Activated B cell treated with CpG ODN at 0.5 μM for 24 hours (primary cell): ENCODE measurements at regions of chr1 and their contacts with region 1.

Region 1: DNA sequence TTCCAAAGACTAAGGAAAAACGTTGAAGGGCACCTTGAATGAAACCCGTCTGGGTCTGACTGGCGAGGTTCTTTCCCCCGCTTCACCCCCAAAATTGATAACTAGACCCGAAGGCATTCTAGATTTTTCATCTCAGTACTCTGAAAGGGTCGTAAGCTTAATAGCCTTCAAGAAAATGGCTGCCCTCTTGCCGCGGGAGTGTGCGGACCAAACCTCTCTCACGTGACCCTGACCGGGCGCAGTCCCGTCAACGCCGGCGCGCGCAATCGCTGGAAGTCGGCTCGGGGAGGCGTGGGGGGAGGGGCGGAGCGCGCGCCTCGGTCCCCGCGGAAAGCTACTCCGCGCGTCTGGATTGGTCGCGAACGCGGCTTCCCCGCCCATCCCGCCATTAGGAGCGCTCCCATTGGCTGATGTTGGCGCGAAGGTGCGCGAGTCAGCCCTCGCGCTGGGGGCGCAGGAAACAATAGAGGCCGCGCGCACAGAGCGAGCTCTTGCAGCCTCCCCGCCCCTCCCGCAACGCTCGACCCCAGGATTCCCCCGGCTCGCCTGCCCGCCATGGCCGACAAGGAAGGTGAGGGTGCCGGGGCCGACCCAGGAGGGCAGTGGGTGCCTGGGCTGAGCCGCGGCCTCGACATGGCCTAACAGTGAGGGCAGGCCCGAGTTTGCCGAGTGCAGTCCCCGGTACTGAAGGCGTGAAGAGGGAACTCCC is at the start of gene RBBP4:
- DNase-seq: peak; percentile 99
- ATAC-seq: peak; percentile 82
- H3K4me3 Mint-ChIP-seq: peak within 1 kb of the TSS; percentile 97
- H3K27ac Mint-ChIP-seq: peak within 1 kb of the TSS; percentile 100
- H3K4me1 Mint-ChIP-seq: peaks cover 70% of the 10 kb centered on the region
- H3K27me3 Mint-ChIP-seq: no peaks in the 10 kb centered on the region
- CTCF ChIP-seq: no peak
- total RNA-seq, gene RBBP4: 228 and 241 TPM in 2 replicates

Region 2: DNA sequence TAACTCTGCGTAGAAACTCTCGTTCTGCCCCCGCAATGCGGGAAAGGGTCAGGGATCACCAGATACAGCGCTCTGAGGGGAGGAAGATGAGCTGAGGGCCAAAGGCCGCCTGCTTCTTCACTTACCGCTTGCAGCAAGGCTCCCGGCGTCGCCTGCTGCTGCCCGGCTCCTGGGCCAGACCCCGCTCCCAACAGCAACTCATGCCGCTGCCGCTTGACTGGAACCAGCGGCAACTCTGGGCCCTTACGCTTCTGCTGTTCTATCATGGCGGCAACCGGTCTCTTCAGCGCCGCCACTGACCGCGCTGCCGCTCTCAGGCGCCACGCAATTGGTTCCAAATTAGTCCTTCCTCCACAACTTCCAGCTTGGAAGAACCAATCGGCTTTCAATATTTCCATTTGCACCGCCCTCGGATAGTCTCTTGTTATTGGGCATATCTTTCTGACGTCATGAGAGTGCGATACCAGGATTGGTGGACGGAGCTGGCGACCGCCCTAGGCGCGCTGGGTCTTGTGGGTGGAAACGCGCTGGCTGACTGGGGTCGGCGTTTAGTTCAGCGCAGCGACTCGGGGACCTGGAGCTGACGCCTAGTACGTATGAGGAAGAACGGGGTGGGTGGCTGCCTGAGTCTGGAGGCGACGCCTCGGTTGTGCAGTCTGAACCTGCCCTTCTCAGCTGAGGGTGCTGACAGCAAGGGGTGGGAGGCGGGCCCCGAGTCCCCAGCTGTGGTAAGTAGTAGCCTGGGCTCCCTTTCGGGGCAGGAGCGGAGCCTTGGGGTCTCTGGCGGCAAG is 1354.2 kb before region 1 on chr1 and contains the starts of genes SNRNP40 and ZCCHC17:
- CTCF ChIA-PET with region 1: no interaction called
- POLR2A ChIA-PET with region 1: interaction called, 8 read pairs
- intact Hi-C with region 1: loop called (anchors 2 kb)
- DNase-seq: peak; percentile 79
- ATAC-seq: peak; percentile 96
- H3K4me3 Mint-ChIP-seq: no peak within 1 kb of the TSS
- H3K27ac Mint-ChIP-seq: no peak within 1 kb of the TSS
- H3K4me1 Mint-ChIP-seq: peaks cover 13% of the 10 kb centered on the region
- H3K27me3 Mint-ChIP-seq: no peaks in the 10 kb centered on the region
- CTCF ChIP-seq: no peak
- total RNA-seq, gene SNRNP40: 83.2 and 85.1 TPM in 2 replicates
- total RNA-seq, gene ZCCHC17: 19.5 and 19.9 TPM in 2 replicates

Region 3: GRCh38 chr1:32394141-32394889 is 256.6 kb before region 1 on chr1 and contains the start of gene BSDC1:
- CTCF ChIA-PET with region 1: no interaction called
- POLR2A ChIA-PET with region 1: interaction called, 5 read pairs
- intact Hi-C with region 1: loop called (anchors 1 kb)
- DNase-seq: peak; percentile 97
- ATAC-seq: peak; percentile 99
- H3K4me3 Mint-ChIP-seq: peak within 1 kb of the TSS; percentile 100
- H3K27ac Mint-ChIP-seq: peak within 1 kb of the TSS; percentile 98
- H3K4me1 Mint-ChIP-seq: peaks cover 27% of the 10 kb centered on the region
- H3K27me3 Mint-ChIP-seq: no peaks in the 10 kb centered on the region
- CTCF ChIP-seq: no peak
- total RNA-seq, gene BSDC1: 51.8 and 72.2 TPM in 2 replicates

Region 4: GRCh38 chr1:32521165-32521564 is 129.7 kb before region 1 on chr1:
- CTCF ChIA-PET with region 1: no interaction called
- POLR2A ChIA-PET with region 1: interaction called, 6 read pairs
- intact Hi-C with region 1: loop called (anchors 2 kb)
- DNase-seq: no peak
- ATAC-seq: no peak
- H3K4me3 Mint-ChIP-seq: peak overlapping the region; percentile 82
- H3K27ac Mint-ChIP-seq: no peak overlapping the region
- H3K4me1 Mint-ChIP-seq: peaks cover 5% of the 10 kb centered on the region
- H3K27me3 Mint-ChIP-seq: no peaks in the 10 kb centered on the region
- CTCF ChIP-seq: no peak

Region 5: DNA sequence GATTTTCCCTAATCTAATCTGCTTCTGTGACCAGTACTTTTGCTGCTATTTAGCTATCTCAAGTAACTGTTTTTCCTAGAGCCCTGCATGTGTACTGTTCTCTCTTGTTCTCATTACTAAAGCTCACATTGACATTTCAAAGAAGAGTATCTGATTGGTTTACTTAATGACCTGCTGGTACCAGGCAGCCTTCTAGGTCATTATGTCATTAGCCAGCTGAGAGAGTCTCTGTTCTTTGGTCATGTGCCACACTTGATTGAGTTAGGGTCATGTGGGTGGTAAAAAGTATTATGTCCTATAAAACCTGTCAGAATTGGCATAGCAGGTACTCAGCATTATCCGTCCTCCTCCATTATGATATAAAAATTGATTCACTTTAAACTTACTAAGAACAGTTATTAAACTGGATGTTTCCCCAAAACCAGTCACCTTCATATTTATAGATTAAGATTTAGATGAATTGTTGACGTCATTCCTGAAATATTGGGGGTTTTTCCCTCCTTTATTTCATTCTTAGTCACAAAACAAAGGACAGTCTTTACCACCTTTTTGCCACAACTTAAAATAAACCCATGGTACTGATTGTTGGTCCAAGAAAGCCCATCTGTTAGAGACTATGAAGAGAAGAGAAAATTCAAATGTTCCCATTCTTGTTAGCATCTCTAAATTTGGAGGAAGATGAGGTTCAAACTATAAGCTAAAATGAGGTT is 197.6 kb after region 1 on chr1:
- CTCF ChIA-PET with region 1: no interaction called
- POLR2A ChIA-PET with region 1: no interaction called
- intact Hi-C with region 1: no loop called
- DNase-seq: no peak
- ATAC-seq: no peak
- H3K4me3 Mint-ChIP-seq: no peak overlapping the region
- H3K27ac Mint-ChIP-seq: no peak overlapping the region
- H3K4me1 Mint-ChIP-seq: no peaks in the 10 kb centered on the region
- H3K27me3 Mint-ChIP-seq: no peaks in the 10 kb centered on the region
- CTCF ChIP-seq: no peak

Region 6: DNA sequence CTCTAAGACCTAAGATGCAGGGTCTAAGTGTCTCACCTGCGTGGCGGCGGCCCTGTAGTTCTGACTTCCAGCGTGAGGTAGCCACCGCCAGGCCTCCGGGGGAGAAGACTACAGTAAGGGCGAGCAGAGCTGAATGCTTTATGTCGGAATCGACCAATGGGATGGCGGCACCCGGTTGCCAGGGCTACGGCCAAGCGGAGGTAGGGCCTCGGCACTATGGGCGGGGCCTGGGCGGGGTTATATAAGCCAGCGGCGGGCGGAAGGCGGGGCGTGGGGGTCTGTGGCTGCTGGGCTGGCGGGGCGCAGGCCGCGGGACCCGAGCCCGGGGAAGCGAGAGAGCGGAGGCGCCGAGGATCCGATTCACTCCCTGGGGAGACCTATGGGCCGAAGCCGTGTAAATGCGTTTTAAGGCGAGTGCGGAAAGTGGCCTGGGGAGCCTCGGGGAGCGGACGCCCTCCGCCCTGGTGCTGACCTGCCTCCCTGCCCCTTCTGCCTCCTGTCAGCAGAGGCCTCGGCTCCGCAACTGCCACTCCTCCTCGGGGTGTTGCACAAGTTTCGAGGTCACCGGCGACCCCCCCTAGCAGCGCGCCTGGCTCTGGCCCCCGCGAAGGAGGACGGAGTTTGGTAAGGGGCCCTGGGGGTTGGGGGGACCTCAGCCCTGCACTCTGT is 430.1 kb after region 1 on chr1 and contains the start of gene AZIN2:
- CTCF ChIA-PET with region 1: no interaction called
- POLR2A ChIA-PET with region 1: no interaction called
- intact Hi-C with region 1: loop called (anchors 1 kb)
- DNase-seq: peak; percentile 94
- ATAC-seq: peak; percentile 99
- H3K4me3 Mint-ChIP-seq: peak within 1 kb of the TSS; percentile 82
- H3K27ac Mint-ChIP-seq: no peak within 1 kb of the TSS
- H3K4me1 Mint-ChIP-seq: peaks cover 17% of the 10 kb centered on the region
- H3K27me3 Mint-ChIP-seq: peaks cover 3% of the 10 kb centered on the region
- CTCF ChIP-seq: no peak
- total RNA-seq, gene AZIN2: 0.82 and 0.93 TPM in 2 replicates

Region 7: GRCh38 chr1:33094971-33095604 is 444.2 kb after region 1 on chr1:
- CTCF ChIA-PET with region 1: no interaction called
- POLR2A ChIA-PET with region 1: no interaction called
- intact Hi-C with region 1: no loop called
- DNase-seq: no peak
- ATAC-seq: no peak
- H3K4me3 Mint-ChIP-seq: no peak overlapping the region
- H3K27ac Mint-ChIP-seq: no peak overlapping the region
- H3K4me1 Mint-ChIP-seq: peaks cover 6% of the 10 kb centered on the region
- H3K27me3 Mint-ChIP-seq: peaks cover 2% of the 10 kb centered on the region
- CTCF ChIP-seq: peak; percentile 79